Sigmoid colon (tissue), 7 donors: ENCODE measurements at regions of chr5 and their contacts with region 1.

Region 1: GRCh38 chr5:157366741-157367674 is 93.0 kb upstream of the NIPAL4 start:
- DNase-seq: peak; percentile 82
- H3K4me3 ChIP-seq: no peak overlapping the region
- H3K27ac ChIP-seq: peak overlapping the region in 3 of 4 donors; percentile 84 to 87 (median 86)
- H3K4me1 ChIP-seq: peaks cover 0 to 69% (median 47%) of the 10 kb centered on the region in 4 donors
- H3K27me3 ChIP-seq: no peaks in the 10 kb centered on the region
- CTCF ChIP-seq: peak; percentile 58 to 71 (median 66)
- EP300 ChIP-seq: no peak
- POLR2A ChIP-seq: no peak

Region 2: GRCh38 chr5:157384971-157385709 is 18.1 kb after region 1 on chr5:
- intact Hi-C with region 1: loop called (anchors 2 kb)
- DNase-seq: peak; percentile 91
- H3K4me3 ChIP-seq: no peak overlapping the region
- H3K27ac ChIP-seq: peak overlapping the region; percentile 82 to 94 (median 86)
- H3K4me1 ChIP-seq: peaks cover 0 to 90% (median 73%) of the 10 kb centered on the region in 4 donors
- H3K27me3 ChIP-seq: no peaks in the 10 kb centered on the region
- CTCF ChIP-seq: no peak
- EP300 ChIP-seq: peak in 3 of 4 donors; percentile 43 to 78 (median 75)
- POLR2A ChIP-seq: no peak

Region 3: DNA sequence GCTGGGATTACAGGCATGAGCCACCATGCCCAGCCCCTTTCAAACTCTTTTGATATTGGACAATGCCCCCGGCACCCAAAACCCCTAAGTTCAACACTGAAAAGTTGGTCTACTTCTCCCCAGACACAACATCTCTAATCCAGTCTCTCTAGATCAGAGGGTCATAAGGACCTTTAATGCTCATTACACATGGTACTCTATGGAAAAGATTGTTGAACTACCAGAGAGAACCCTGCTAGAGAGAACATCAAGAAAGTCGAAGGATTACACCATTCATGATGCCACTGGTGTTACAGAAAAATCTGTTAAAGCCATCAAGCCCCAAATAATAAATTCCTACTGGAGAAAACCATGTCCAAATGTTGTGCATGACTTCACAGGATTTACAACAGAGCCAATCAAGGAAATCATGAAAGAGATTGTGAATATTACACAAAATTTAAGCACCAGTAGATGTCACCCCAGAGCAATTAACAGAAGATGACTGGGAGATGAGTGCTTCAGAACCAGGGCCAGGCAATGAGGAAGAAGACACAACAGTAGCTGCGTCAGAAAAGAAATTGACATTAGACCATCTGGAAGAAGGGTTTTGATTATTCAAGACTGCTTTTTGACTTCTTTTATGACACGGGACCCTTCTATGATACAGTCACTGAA is 64.7 kb after region 1 on chr5:
- intact Hi-C with region 1: loop called (anchors 2 kb)
- DNase-seq: no peak
- H3K4me3 ChIP-seq: no peak overlapping the region
- H3K27ac ChIP-seq: peak overlapping the region in 3 of 4 donors; percentile 7 to 41 (median 22)
- H3K4me1 ChIP-seq: no peaks in the 10 kb centered on the region
- H3K27me3 ChIP-seq: no peaks in the 10 kb centered on the region
- CTCF ChIP-seq: peak in 3 of 4 experiments; percentile 46 to 53 (median 52)
- EP300 ChIP-seq: no peak
- POLR2A ChIP-seq: no peak

Region 4: GRCh38 chr5:157464519-157465171 is 97.6 kb after region 1 on chr5:
- intact Hi-C with region 1: loop called (anchors 5 kb)
- DNase-seq: peak; percentile 83
- H3K4me3 ChIP-seq: no peak overlapping the region
- H3K27ac ChIP-seq: peak overlapping the region; percentile 53 to 81 (median 72)
- H3K4me1 ChIP-seq: peaks cover 0 to 55% (median 34%) of the 10 kb centered on the region in 4 donors
- H3K27me3 ChIP-seq: no peaks in the 10 kb centered on the region
- CTCF ChIP-seq: no peak
- EP300 ChIP-seq: peak in 2 of 4 donors; percentile 17 to 37
- POLR2A ChIP-seq: no peak

Region 5: DNA sequence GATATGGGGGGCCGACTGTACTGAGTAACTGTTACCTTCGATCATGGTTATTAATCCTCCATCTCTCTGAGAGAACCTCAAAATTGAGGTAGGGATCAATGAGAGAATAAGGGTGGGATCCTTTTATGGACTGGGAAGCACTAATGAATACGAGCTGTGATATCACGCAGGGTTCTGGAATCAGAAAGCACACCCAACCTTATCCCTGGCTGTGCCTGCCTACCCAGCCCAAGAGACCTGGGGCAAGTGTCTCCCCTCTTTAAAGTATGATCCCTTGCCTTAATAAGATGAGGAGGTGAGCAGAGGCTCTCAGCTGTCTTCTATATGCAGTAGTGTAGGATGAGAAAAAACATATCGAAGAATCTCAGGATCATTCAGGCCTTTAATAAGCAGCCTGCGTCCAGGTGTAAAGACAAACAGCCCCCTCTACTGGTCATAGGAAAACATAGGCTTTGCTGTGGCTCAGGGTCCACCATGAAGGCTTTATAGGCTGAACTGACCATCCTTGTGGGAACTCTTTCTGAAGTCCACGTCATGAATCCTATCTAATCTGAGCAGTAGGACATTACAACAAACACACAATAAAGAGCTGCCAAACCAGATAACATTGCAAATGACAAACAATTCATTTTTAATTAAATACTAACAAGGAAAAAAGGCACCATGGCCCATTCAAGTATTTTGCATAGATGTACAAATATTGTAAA is 109.8 kb after region 1 on chr5:
- intact Hi-C with region 1: loop called (anchors 1 kb)
- DNase-seq: peak; percentile 67
- H3K4me3 ChIP-seq: no peak overlapping the region
- H3K27ac ChIP-seq: peak overlapping the region; percentile 38 to 88 (median 84)
- H3K4me1 ChIP-seq: peaks cover 0 to 86% (median 53%) of the 10 kb centered on the region in 4 donors
- H3K27me3 ChIP-seq: no peaks in the 10 kb centered on the region
- CTCF ChIP-seq: peak; percentile 68 to 88 (median 80)
- EP300 ChIP-seq: no peak
- POLR2A ChIP-seq: no peak

Region 6: GRCh38 chr5:157520911-157521703 is 154.1 kb after region 1 on chr5:
- intact Hi-C with region 1: no loop called
- DNase-seq: no peak
- H3K4me3 ChIP-seq: no peak overlapping the region
- H3K27ac ChIP-seq: peak overlapping the region; percentile 64 to 95 (median 84)
- H3K4me1 ChIP-seq: peaks cover 0 to 73% (median 69%) of the 10 kb centered on the region in 4 donors
- H3K27me3 ChIP-seq: no peaks in the 10 kb centered on the region
- CTCF ChIP-seq: no peak
- EP300 ChIP-seq: peak; percentile 6 to 77 (median 50)
- POLR2A ChIP-seq: no peak

Region 7: GRCh38 chr5:157563929-157564716 is 197.1 kb after region 1 on chr5:
- intact Hi-C with region 1: no loop called
- DNase-seq: no peak
- H3K4me3 ChIP-seq: no peak overlapping the region
- H3K27ac ChIP-seq: peak overlapping the region; percentile 79 to 95 (median 88)
- H3K4me1 ChIP-seq: peaks cover 0 to 96% (median 74%) of the 10 kb centered on the region in 4 donors
- H3K27me3 ChIP-seq: no peaks in the 10 kb centered on the region
- CTCF ChIP-seq: no peak
- EP300 ChIP-seq: no peak
- POLR2A ChIP-seq: no peak